Adrenal gland (tissue), 19 donors: ENCODE measurements at regions of chr15 and their contacts with region 1.

Region 1: DNA sequence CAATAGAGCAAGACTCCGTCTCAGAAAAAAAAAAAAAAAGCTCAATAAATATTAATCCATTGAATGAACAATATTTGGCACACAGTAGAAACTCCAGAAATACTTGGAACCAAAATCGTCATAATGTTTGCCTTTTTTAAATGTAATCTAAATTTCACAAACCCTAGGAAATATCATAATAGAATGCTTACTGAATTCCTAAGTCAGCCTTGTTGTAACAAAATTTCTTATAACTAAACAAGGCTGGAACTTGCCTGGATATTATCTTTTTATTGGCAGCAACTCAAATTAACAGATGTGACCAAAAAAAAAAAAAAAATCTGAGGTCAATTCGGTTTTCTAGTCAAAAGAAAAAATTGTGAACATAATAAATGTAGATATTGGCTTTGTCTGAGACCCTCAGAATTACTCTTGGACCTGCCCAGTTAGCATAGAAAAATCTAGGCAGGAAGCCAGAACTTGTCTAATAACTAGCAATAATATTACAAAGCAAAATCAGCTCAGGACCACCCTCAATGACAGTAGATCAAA is 33.3 kb downstream of the GABPB1 start:
- DNase-seq: no peak
- H3K4me3 ChIP-seq: no peak overlapping the region
- H3K27ac ChIP-seq: no peak overlapping the region
- H3K4me1 ChIP-seq: peaks cover 0 to 6% of the 10 kb centered on the region in 2 donors
- H3K27me3 ChIP-seq: no peaks in the 10 kb centered on the region
- CTCF ChIP-seq: no peak
- POLR2A ChIP-seq: no peak

Region 2: DNA sequence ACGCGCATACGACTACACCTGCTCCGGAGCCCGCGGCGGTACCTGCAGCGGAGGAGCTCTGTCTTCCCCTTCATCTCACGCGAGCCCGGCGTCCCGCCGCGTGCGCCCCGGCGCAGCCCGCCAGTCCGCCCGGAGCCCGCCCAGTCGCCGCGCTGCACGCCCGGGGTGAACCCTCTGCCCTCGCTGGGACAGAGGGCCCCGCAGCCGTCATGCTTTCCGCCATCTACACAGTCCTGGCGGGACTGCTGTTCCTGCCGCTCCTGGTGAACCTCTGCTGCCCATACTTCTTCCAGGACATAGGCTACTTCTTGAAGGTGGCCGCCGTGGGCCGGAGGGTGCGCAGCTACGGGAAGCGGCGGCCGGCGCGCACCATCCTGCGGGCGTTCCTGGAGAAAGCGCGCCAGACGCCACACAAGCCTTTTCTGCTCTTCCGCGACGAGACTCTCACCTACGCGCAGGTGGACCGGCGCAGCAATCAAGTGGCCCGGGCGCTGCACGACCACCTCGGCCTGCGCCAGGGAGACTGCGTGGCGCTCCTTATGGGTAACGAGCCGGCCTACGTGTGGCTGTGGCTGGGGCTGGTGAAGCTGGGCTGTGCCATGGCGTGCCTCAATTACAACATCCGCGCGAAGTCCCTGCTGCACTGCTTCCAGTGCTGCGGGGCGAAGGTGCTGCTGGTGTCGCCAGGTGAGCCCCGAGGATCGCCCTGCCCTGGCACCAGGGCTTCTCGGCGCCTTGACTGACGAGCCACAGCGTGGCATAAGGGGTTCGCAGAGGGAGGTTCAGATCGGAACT is 139.3 kb before region 1 on chr15:
- intact Hi-C with region 1: loop called in 1 of 2 experiments (anchors 10 kb)
- DNase-seq: peak in 3 of 7 donors; percentile 20 to 30 (median 26)
- H3K4me3 ChIP-seq: peak overlapping the region in 3 of 4 donors; percentile 25 to 64 (median 33)
- H3K27ac ChIP-seq: no peak overlapping the region
- H3K4me1 ChIP-seq: peaks cover 7 to 11% of the 10 kb centered on the region in 2 donors
- H3K27me3 ChIP-seq: peaks cover 8% of the 10 kb centered on the region
- CTCF ChIP-seq: no peak
- POLR2A ChIP-seq: no peak